Stomach (tissue), 19 donors: ENCODE measurements at regions of chr11 and their contacts with region 1.

Region 1: DNA sequence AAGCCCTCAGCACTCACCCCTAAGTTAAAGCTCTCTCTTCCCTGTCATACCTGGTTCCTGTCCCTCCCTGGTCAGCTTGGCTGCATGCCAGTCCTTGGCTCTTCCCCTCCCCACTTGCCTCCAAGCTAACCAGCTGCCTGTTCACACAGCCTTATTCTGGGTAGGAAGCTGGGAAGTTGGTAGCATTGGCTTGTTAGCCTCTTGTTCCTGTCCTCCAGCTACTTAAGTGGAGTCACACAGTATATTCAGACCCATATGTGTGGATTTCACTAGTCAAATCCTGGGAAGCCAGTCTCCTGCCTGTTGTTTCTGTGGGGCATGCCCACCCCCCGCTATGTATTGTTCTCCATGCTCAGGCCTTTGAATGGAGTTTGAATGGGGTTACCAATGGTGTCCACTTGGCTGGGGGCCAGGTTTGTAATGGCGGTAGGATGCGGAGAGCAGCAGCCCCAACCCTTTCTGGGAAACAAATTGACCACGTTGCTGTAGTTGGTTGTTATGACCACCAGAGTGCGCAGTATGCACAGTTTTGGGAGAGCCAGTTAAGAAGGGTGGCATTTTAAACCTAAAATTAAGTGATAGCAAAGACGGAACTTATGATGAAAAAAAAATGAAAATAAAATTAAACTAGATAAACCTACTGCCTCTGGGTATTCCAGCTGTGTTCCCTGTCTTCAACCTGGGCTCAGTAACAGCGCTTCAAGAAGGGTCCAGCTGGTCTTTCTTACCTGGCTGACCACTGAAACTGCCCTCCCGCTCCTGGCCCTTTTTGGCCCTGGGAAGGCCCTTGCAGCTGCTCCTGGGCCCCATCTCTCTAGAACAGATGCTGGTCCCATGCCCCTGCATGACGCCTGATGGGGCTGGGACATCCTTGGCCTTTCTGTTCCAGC is 10.7 kb upstream of the RPS3 start:
- DNase-seq: peak; percentile 68 to 93
- H3K4me3 ChIP-seq: peak overlapping the region in 1 of 4 donors; percentile 24
- H3K27ac ChIP-seq: peak overlapping the region in 3 of 5 donors; percentile 9 to 62 (median 50)
- H3K4me1 ChIP-seq: peaks cover 5 to 27% (median 22%) of the 10 kb centered on the region in 4 donors
- H3K27me3 ChIP-seq: no peaks in the 10 kb centered on the region
- CTCF ChIP-seq: peak in 5 of 7 experiments; percentile 64 to 92 (median 86)
- EP300 ChIP-seq: no peak
- POLR2A ChIP-seq: no peak

Region 2: GRCh38 chr11:75100314-75100713 is 288.3 kb before region 1 on chr11:
- intact Hi-C with region 1: no loop called
- DNase-seq: no peak
- H3K4me3 ChIP-seq: no peak overlapping the region
- H3K27ac ChIP-seq: no peak overlapping the region
- H3K4me1 ChIP-seq: no peaks in the 10 kb centered on the region
- H3K27me3 ChIP-seq: peaks cover 0 to 31% (median 0%) of the 10 kb centered on the region in 3 donors
- CTCF ChIP-seq: no peak
- EP300 ChIP-seq: no peak
- POLR2A ChIP-seq: no peak

Region 3: GRCh38 chr11:75280227-75280701 is 108.4 kb before region 1 on chr11:
- intact Hi-C with region 1: loop called (anchors 5 kb)
- DNase-seq: peak; percentile 83 to 93
- H3K4me3 ChIP-seq: no peak overlapping the region
- H3K27ac ChIP-seq: peak overlapping the region in 4 of 5 donors; percentile 16 to 56 (median 54)
- H3K4me1 ChIP-seq: peaks cover 5 to 36% (median 15%) of the 10 kb centered on the region in 4 donors
- H3K27me3 ChIP-seq: no peaks in the 10 kb centered on the region
- CTCF ChIP-seq: peak in 6 of 7 experiments; percentile 96 to 99 (median 97)
- EP300 ChIP-seq: no peak
- POLR2A ChIP-seq: no peak

Region 4: GRCh38 chr11:75328426-75329277 is 60.0 kb before region 1 on chr11:
- intact Hi-C with region 1: loop called (anchors 10 kb)
- DNase-seq: peak; percentile 79 to 93
- H3K4me3 ChIP-seq: no peak overlapping the region
- H3K27ac ChIP-seq: peak overlapping the region; percentile 79 to 97 (median 97)
- H3K4me1 ChIP-seq: peaks cover 82 to 100% (median 92%) of the 10 kb centered on the region in 4 donors
- H3K27me3 ChIP-seq: no peaks in the 10 kb centered on the region
- CTCF ChIP-seq: peak in 5 of 7 experiments; percentile 24 to 76 (median 48)
- EP300 ChIP-seq: no peak
- POLR2A ChIP-seq: no peak